ENCODE measurements at regions of chr1 and their contacts with region 1.

Region 1: GRCh38 chr1:93078986-93079654 is at the start of gene MTF2:
- DNase-seq: peak; percentile 84 to 95 (median 89)
- ATAC-seq: peak; percentile 87 to 94 (median 90)
- H3K4me3 ChIP-seq: peak within 1 kb of the TSS; percentile 91 to 93
- H3K4me3 Mint-ChIP-seq: peak within 1 kb of the TSS; percentile 97 to 100 (median 99)
- H3K27ac ChIP-seq: peak within 1 kb of the TSS; percentile 90
- H3K27ac Mint-ChIP-seq: peak within 1 kb of the TSS; percentile 98 to 99
- H3K4me1 ChIP-seq: peaks cover 18 to 31% of the 10 kb centered on the region in 2 experiments
- H3K4me1 Mint-ChIP-seq: peaks cover 47 to 60% (median 49%) of the 10 kb centered on the region in 3 donors
- H3K27me3 ChIP-seq: no peaks in the 10 kb centered on the region
- H3K27me3 Mint-ChIP-seq: no peaks in the 10 kb centered on the region
- total RNA-seq, gene MTF2: 40.1 to 49.2 (median 47.4) TPM

Region 2: GRCh38 chr1:93042187-93043056 is 36.7 kb before region 1 on chr1:
- CTCF ChIA-PET with region 1: interaction called in 1 of 2 experiments, 10 read pairs
- POLR2A ChIA-PET with region 1: interaction called in 1 of 2 experiments, 8 read pairs
- DNase-seq: peak in 23 of 35 experiments; percentile 3 to 86 (median 22)
- ATAC-seq: peak; percentile 95 to 99 (median 98)
- H3K4me3 ChIP-seq: peak overlapping the region; percentile 35 to 41
- H3K4me3 Mint-ChIP-seq: peak overlapping the region; percentile 62 to 83 (median 78)
- H3K27ac ChIP-seq: peak overlapping the region; percentile 90
- H3K27ac Mint-ChIP-seq: peak overlapping the region; percentile 94 to 96
- H3K4me1 ChIP-seq: peaks cover 7 to 11% of the 10 kb centered on the region in 2 experiments
- H3K4me1 Mint-ChIP-seq: peaks cover 16 to 18% (median 17%) of the 10 kb centered on the region in 3 donors
- H3K27me3 ChIP-seq: no peaks in the 10 kb centered on the region
- H3K27me3 Mint-ChIP-seq: no peaks in the 10 kb centered on the region

Region 3: GRCh38 chr1:93095804-93096585 is 16.9 kb after region 1 on chr1:
- CTCF ChIA-PET with region 1: interaction called in 1 of 2 experiments, 10 read pairs
- POLR2A ChIA-PET with region 1: interaction called, 4 to 6 read pairs
- DNase-seq: no peak
- ATAC-seq: no peak
- H3K4me3 ChIP-seq: no peak overlapping the region
- H3K4me3 Mint-ChIP-seq: peak overlapping the region in 1 of 3 donors; percentile 40
- H3K27ac ChIP-seq: no peak overlapping the region
- H3K27ac Mint-ChIP-seq: no peak overlapping the region
- H3K4me1 ChIP-seq: peaks cover 0 to 12% of the 10 kb centered on the region in 2 experiments
- H3K4me1 Mint-ChIP-seq: peaks cover 84 to 87% (median 84%) of the 10 kb centered on the region in 3 donors
- H3K27me3 ChIP-seq: no peaks in the 10 kb centered on the region
- H3K27me3 Mint-ChIP-seq: no peaks in the 10 kb centered on the region

Region 4: GRCh38 chr1:93338421-93338820 is 259.3 kb after region 1 on chr1:
- CTCF ChIA-PET with region 1: interaction called in 1 of 2 experiments, 10 read pairs
- POLR2A ChIA-PET with region 1: no interaction called
- DNase-seq: no peak
- ATAC-seq: no peak
- H3K4me3 ChIP-seq: no peak overlapping the region
- H3K4me3 Mint-ChIP-seq: no peak overlapping the region
- H3K27ac ChIP-seq: no peak overlapping the region
- H3K27ac Mint-ChIP-seq: no peak overlapping the region
- H3K4me1 ChIP-seq: peaks cover 2 to 31% of the 10 kb centered on the region in 2 experiments
- H3K4me1 Mint-ChIP-seq: peaks cover 10 to 18% (median 16%) of the 10 kb centered on the region in 3 donors
- H3K27me3 ChIP-seq: no peaks in the 10 kb centered on the region
- H3K27me3 Mint-ChIP-seq: no peaks in the 10 kb centered on the region

Measured in T-cell (primary cell).